Mammary epithelial cell (primary cell): ENCODE measurements at regions of chr17 and their contacts with region 1.

Region 1: GRCh38 chr17:32285746-32286517 is 20.3 kb downstream of the RHBDL3 start:
- DNase-seq: no peak
- H3K4me3 ChIP-seq: no peak overlapping the region
- H3K27ac ChIP-seq: no peak overlapping the region
- H3K4me1 ChIP-seq: no peaks in the 10 kb centered on the region
- H3K27me3 ChIP-seq: no peaks in the 10 kb centered on the region
- CTCF ChIP-seq: no peak

Region 2: DNA sequence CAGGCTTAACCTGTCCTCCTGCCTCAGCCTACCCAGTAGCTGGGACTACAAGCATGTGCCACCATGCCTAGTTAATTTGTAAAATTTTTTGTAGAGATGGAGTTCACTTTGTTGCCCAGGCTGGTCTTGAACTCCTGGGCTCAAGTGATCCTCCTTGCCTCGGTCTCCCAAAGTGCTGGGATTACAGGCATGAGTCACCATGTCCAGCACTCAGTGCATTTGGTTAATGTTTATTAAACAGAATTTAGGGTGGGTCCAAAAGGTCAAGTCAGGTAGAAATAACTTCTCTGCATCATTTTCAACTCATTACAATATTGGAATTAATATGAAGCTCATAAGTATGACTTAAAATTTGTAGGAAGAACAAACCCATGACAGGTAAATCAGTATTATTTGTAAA is 87.9 kb before region 1 on chr17:
- CTCF ChIA-PET with region 1: no interaction called
- dilution Hi-C with region 1: loop called (anchors 5 kb)
- in situ Hi-C with region 1: no loop called
- intact Hi-C with region 1: no loop called
- DNase-seq: no peak
- H3K4me3 ChIP-seq: no peak overlapping the region
- H3K27ac ChIP-seq: no peak overlapping the region
- H3K4me1 ChIP-seq: no peaks in the 10 kb centered on the region
- H3K27me3 ChIP-seq: no peaks in the 10 kb centered on the region
- CTCF ChIP-seq: no peak

Region 3: GRCh38 chr17:32240750-32241149 is 45.2 kb before region 1 on chr17:
- CTCF ChIA-PET with region 1: no interaction called
- dilution Hi-C with region 1: loop called (anchors 5 kb)
- in situ Hi-C with region 1: no loop called
- intact Hi-C with region 1: no loop called
- DNase-seq: peak; percentile 14
- H3K4me3 ChIP-seq: no peak overlapping the region
- H3K27ac ChIP-seq: no peak overlapping the region
- H3K4me1 ChIP-seq: no peaks in the 10 kb centered on the region
- H3K27me3 ChIP-seq: no peaks in the 10 kb centered on the region
- CTCF ChIP-seq: no peak